ENCODE measurements at regions of chr12 and their contacts with region 1.

Region 1: DNA sequence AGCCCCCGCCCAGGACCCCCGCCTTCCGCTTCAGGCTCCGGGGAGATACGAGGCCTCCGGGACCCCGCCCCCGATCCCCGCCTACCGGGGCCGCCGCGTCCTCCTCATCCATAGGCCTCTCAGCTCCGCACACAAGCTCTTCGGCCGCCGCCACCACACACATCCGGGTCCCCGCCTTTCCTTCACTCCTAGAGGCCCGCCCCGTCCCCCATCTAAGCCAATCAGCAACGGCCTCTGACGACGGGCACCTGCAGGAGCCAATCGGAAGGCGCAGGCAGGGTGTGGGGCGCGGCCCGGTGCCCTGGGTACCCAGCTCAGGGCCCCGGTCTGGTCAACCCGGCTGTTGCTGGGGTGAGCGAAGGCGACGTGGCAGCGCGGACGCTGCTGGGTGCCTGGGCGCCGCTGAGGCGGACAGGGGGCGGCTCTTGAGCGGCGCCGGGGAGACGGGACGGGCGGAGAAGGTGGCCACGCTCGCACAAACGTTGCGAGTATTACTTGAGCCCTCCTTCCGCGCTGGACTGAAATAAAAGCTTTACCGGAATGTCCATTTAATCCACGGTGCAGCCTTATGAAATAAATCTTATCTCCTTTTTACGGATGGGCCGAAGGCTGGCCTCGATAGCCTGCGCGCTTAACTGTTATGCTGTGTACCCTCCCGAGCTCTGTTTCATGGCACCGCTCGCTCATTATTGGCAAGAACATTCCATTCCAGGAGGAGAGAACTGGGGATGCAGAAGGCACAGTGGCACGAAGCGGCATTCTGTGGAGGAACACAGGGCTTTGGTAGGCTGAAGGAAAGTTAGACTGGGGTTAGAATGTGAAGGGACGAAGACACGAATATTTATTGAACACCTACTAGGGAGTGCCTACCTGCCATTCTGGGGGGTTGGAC is at the start of gene SPRYD3:
- DNase-seq: peak; percentile 97 to 98
- H3K4me3 ChIP-seq: peak within 1 kb of the TSS; percentile 71
- H3K4me3 Mint-ChIP-seq: peak within 1 kb of the TSS; percentile 89
- H3K27ac Mint-ChIP-seq: peak within 1 kb of the TSS; percentile 94
- H3K4me1 ChIP-seq: peaks cover 4% of the 10 kb centered on the region; the same call in 1 of the 2 replicates
- H3K4me1 Mint-ChIP-seq: peaks cover 11% of the 10 kb centered on the region
- H3K27me3 ChIP-seq: no peaks in the 10 kb centered on the region
- H3K27me3 Mint-ChIP-seq: no peaks in the 10 kb centered on the region
- CTCF ChIP-seq: no peak
- total RNA-seq, gene SPRYD3: 8.2 and 8.8 TPM in 2 replicates

Region 2: GRCh38 chr12:52774629-52775250 is 304.7 kb before region 1 on chr12:
- CTCF ChIA-PET with region 1: no interaction called
- POLR2A ChIA-PET with region 1: no interaction called
- intact Hi-C with region 1: no loop called
- DNase-seq: no peak
- H3K4me3 ChIP-seq: no peak overlapping the region
- H3K4me3 Mint-ChIP-seq: no peak overlapping the region
- H3K27ac Mint-ChIP-seq: no peak overlapping the region
- H3K4me1 ChIP-seq: no peaks in the 10 kb centered on the region
- H3K4me1 Mint-ChIP-seq: no peaks in the 10 kb centered on the region
- H3K27me3 ChIP-seq: no peaks in the 10 kb centered on the region
- H3K27me3 Mint-ChIP-seq: peaks cover 6% of the 10 kb centered on the region
- CTCF ChIP-seq: no peak

Region 3: GRCh38 chr12:53098982-53099651 is 19.6 kb after region 1 on chr12:
- CTCF ChIA-PET with region 1: interaction called, 16 read pairs
- POLR2A ChIA-PET with region 1: interaction called, 7 read pairs
- intact Hi-C with region 1: loop called (anchors 1 kb)
- DNase-seq: peak; percentile 90
- H3K4me3 ChIP-seq: no peak overlapping the region
- H3K4me3 Mint-ChIP-seq: peak overlapping the region; percentile 68
- H3K27ac Mint-ChIP-seq: peak overlapping the region; percentile 49
- H3K4me1 ChIP-seq: peaks cover 36% of the 10 kb centered on the region
- H3K4me1 Mint-ChIP-seq: peaks cover 42% of the 10 kb centered on the region
- H3K27me3 ChIP-seq: no peaks in the 10 kb centered on the region
- H3K27me3 Mint-ChIP-seq: no peaks in the 10 kb centered on the region
- CTCF ChIP-seq: peak; percentile 92 to 93

Region 4: DNA sequence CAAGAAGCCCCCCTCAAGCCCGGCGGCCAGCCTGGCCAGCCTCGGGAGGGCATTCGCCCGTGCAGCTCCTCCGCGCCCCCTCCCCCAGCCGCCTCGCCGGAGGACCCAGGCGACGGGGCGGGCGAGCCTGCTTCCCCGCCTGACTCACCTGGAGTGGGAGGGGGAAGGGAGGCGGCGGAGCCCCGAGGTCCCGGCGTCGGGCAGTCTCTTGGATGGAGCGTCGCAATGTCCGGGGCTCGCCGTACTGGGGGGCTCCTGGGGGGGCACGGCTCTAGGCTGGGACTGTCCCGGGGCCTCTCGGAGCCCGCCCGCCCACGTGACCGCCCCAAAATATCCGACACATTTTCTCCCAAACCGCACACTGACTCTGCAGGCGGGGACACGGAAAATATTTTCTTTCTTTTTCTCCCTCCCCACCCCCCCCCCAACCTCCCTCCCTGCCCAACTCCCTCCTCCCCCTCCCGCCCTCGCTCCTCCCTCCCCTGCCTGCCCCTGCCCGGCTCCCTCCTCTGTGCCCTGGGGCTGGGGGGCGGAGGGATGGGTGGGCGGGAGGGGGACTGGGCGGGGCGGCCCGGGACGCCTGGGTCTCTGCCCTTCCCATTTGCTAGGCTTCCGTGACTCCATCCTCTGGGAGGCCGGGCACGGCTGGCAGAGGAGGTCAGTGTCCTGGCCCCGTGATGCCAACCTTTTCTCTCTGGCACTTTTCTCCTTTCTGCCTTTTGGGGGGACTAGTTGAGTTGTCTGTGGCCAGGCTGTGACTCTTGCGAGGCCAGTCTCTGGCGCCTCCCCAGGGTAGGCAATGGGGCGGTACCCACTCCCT is 152.6 kb after region 1 on chr12 and contains the start of gene RARG:
- CTCF ChIA-PET with region 1: no interaction called
- POLR2A ChIA-PET with region 1: no interaction called
- intact Hi-C with region 1: no loop called
- DNase-seq: peak in 1 of 2 experiments; percentile 61
- H3K4me3 ChIP-seq: peak within 1 kb of the TSS; percentile 55
- H3K4me3 Mint-ChIP-seq: peak within 1 kb of the TSS; percentile 77
- H3K27ac Mint-ChIP-seq: peak within 1 kb of the TSS; percentile 17
- H3K4me1 ChIP-seq: peaks cover 28% of the 10 kb centered on the region
- H3K4me1 Mint-ChIP-seq: peaks cover 21% of the 10 kb centered on the region
- H3K27me3 ChIP-seq: no peaks in the 10 kb centered on the region
- H3K27me3 Mint-ChIP-seq: no peaks in the 10 kb centered on the region
- CTCF ChIP-seq: no peak
- total RNA-seq, gene RARG: 11.8 and 12.9 TPM in 2 replicates

Measured in Caco-2 (cell line).